Naive thymus-derived CD4-positive, alpha-beta T cell (primary cell): ENCODE measurements at regions of chr16 and their contacts with region 1.

Region 1: GRCh38 chr16:14300705-14301168 is 229.6 kb downstream of the MRTFB start:
- DNase-seq: peak in 6 of 9 donors; percentile 24 to 58 (median 52)
- ATAC-seq: peak; percentile 58
- H3K4me3 ChIP-seq: no peak overlapping the region
- H3K4me3 Mint-ChIP-seq: peak overlapping the region; percentile 83 to 91 (median 88)
- H3K27ac ChIP-seq: peak overlapping the region; percentile 45
- H3K27ac Mint-ChIP-seq: peak overlapping the region; percentile 23 to 88 (median 69)
- H3K4me1 ChIP-seq: peaks cover 7 to 8% of the 10 kb centered on the region in 2 donors
- H3K4me1 Mint-ChIP-seq: peaks cover 7 to 29% (median 25%) of the 10 kb centered on the region in 7 donors
- H3K27me3 ChIP-seq: no peaks in the 10 kb centered on the region
- H3K27me3 Mint-ChIP-seq: peaks cover 0 to 38% (median 0%) of the 10 kb centered on the region in 5 donors

Region 2: GRCh38 chr16:14249291-14250032 is 51.3 kb before region 1 on chr16:
- CTCF ChIA-PET with region 1: no interaction called
- POLR2A ChIA-PET with region 1: no interaction called
- intact Hi-C with region 1: loop called in 1 of 2 experiments (anchors 2 kb)
- DNase-seq: peak in 8 of 9 donors; percentile 25 to 66 (median 49)
- ATAC-seq: peak; percentile 59
- H3K4me3 ChIP-seq: no peak overlapping the region
- H3K4me3 Mint-ChIP-seq: no peak overlapping the region
- H3K27ac ChIP-seq: no peak overlapping the region
- H3K27ac Mint-ChIP-seq: no peak overlapping the region
- H3K4me1 ChIP-seq: no peaks in the 10 kb centered on the region
- H3K4me1 Mint-ChIP-seq: no peaks in the 10 kb centered on the region
- H3K27me3 ChIP-seq: no peaks in the 10 kb centered on the region
- H3K27me3 Mint-ChIP-seq: no peaks in the 10 kb centered on the region

Region 3: GRCh38 chr16:14268073-14268472 is 32.7 kb before region 1 on chr16:
- CTCF ChIA-PET with region 1: no interaction called
- POLR2A ChIA-PET with region 1: no interaction called
- intact Hi-C with region 1: no loop called
- DNase-seq: no peak
- ATAC-seq: no peak
- H3K4me3 ChIP-seq: no peak overlapping the region
- H3K4me3 Mint-ChIP-seq: no peak overlapping the region
- H3K27ac ChIP-seq: no peak overlapping the region
- H3K27ac Mint-ChIP-seq: no peak overlapping the region
- H3K4me1 ChIP-seq: no peaks in the 10 kb centered on the region
- H3K4me1 Mint-ChIP-seq: no peaks in the 10 kb centered on the region
- H3K27me3 ChIP-seq: no peaks in the 10 kb centered on the region
- H3K27me3 Mint-ChIP-seq: peaks cover 0 to 4% (median 0%) of the 10 kb centered on the region in 5 donors

Region 4: GRCh38 chr16:14354551-14355351 is 54.0 kb after region 1 on chr16:
- CTCF ChIA-PET with region 1: no interaction called
- POLR2A ChIA-PET with region 1: no interaction called
- intact Hi-C with region 1: loop called (anchors 2 to 10 kb)
- DNase-seq: peak in 6 of 9 donors; percentile 25 to 39 (median 26)
- ATAC-seq: peak; percentile 82
- H3K4me3 ChIP-seq: peak overlapping the region; percentile 24
- H3K4me3 Mint-ChIP-seq: peak overlapping the region; percentile 62 to 92 (median 84)
- H3K27ac ChIP-seq: peak overlapping the region; percentile 14
- H3K27ac Mint-ChIP-seq: peak overlapping the region; percentile 11 to 84 (median 77)
- H3K4me1 ChIP-seq: peaks cover 0 to 6% of the 10 kb centered on the region in 2 donors
- H3K4me1 Mint-ChIP-seq: peaks cover 7 to 12% (median 11%) of the 10 kb centered on the region in 7 donors
- H3K27me3 ChIP-seq: no peaks in the 10 kb centered on the region
- H3K27me3 Mint-ChIP-seq: peaks cover 0 to 17% (median 0%) of the 10 kb centered on the region in 5 donors

Region 5: DNA sequence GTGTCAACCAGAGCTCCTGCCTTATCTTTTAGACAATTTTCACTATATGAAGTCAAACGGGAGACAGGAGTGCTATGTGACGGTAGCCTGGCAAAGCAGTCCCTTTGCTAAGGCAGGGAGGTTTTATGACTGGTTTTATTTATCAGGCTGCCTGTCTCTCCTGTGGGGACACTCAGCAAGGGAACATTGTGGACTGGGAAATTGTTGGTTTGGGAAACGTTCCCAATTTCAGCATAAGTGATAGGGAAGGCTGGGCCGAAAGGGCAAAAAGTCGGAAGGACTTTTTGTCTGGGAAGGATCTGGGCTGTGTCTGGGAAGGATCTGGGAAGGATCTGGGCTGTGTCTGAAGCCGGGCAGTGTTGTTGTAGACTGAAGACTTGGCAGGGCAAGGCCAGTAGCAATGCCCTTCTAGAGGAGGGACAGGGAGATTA is 118.1 kb after region 1 on chr16:
- CTCF ChIA-PET with region 1: no interaction called
- POLR2A ChIA-PET with region 1: no interaction called
- intact Hi-C with region 1: no loop called
- DNase-seq: no peak
- ATAC-seq: no peak
- H3K4me3 ChIP-seq: no peak overlapping the region
- H3K4me3 Mint-ChIP-seq: no peak overlapping the region
- H3K27ac ChIP-seq: no peak overlapping the region
- H3K27ac Mint-ChIP-seq: no peak overlapping the region
- H3K4me1 ChIP-seq: no peaks in the 10 kb centered on the region
- H3K4me1 Mint-ChIP-seq: peaks cover 0 to 3% (median 0%) of the 10 kb centered on the region in 7 donors
- H3K27me3 ChIP-seq: no peaks in the 10 kb centered on the region
- H3K27me3 Mint-ChIP-seq: no peaks in the 10 kb centered on the region

Region 6: DNA sequence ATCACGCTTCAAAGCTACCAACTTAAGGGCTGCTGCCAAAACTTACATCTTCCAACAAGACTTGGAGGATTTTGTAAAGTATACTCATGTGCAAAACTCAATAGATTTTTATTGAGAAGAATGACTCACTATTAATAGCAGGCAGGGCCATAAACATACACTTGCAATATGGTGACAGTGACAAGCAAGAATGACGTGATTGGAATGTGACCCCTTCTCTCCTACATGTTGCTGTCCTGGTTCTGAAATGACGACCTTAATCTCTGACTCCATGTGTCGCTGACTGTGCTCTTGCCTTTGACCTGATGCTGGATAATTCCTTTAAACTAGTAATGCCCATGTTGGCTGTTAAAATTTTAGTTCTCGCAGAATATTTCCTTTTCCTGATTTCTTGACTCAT is 154.8 kb after region 1 on chr16:
- CTCF ChIA-PET with region 1: no interaction called
- POLR2A ChIA-PET with region 1: no interaction called
- intact Hi-C with region 1: loop called in 1 of 2 experiments (anchors 10 kb)
- DNase-seq: no peak
- ATAC-seq: no peak
- H3K4me3 ChIP-seq: no peak overlapping the region
- H3K4me3 Mint-ChIP-seq: no peak overlapping the region
- H3K27ac ChIP-seq: no peak overlapping the region
- H3K27ac Mint-ChIP-seq: peak overlapping the region in 1 of 9 donors; percentile 65
- H3K4me1 ChIP-seq: no peaks in the 10 kb centered on the region
- H3K4me1 Mint-ChIP-seq: peaks cover 0 to 11% (median 0%) of the 10 kb centered on the region in 7 donors
- H3K27me3 ChIP-seq: no peaks in the 10 kb centered on the region
- H3K27me3 Mint-ChIP-seq: no peaks in the 10 kb centered on the region

Region 7: DNA sequence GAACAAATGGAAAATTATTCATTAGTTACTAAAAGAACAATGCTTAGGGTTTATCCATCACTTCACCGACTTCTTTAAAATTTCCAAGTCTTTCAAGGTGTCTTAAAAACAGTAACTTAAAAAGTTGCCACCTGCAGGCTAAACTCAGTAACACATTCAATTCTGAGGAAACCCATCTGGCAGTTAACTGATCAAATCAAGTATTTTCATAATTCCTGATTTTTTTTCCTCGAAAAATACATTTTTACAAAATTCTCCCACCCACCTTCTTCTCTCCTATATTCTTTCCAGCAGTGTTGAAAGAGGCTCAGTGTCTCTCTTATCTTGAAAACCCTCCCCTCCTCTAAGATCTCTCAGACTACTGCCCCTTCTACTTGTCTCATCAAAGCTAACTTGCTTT is 299.4 kb after region 1 on chr16:
- CTCF ChIA-PET with region 1: interaction called, 4 read pairs
- POLR2A ChIA-PET with region 1: no interaction called
- intact Hi-C with region 1: loop called in 1 of 2 experiments (anchors 1 kb)
- DNase-seq: peak in 4 of 9 donors; percentile 8 to 30 (median 18)
- ATAC-seq: no peak
- H3K4me3 ChIP-seq: no peak overlapping the region
- H3K4me3 Mint-ChIP-seq: no peak overlapping the region
- H3K27ac ChIP-seq: no peak overlapping the region
- H3K27ac Mint-ChIP-seq: no peak overlapping the region
- H3K4me1 ChIP-seq: no peaks in the 10 kb centered on the region
- H3K4me1 Mint-ChIP-seq: peaks cover 0 to 6% (median 3%) of the 10 kb centered on the region in 7 donors
- H3K27me3 ChIP-seq: no peaks in the 10 kb centered on the region
- H3K27me3 Mint-ChIP-seq: no peaks in the 10 kb centered on the region